BJ (cell line): ENCODE measurements at regions of chr12 and their contacts with region 1.

Region 1: DNA sequence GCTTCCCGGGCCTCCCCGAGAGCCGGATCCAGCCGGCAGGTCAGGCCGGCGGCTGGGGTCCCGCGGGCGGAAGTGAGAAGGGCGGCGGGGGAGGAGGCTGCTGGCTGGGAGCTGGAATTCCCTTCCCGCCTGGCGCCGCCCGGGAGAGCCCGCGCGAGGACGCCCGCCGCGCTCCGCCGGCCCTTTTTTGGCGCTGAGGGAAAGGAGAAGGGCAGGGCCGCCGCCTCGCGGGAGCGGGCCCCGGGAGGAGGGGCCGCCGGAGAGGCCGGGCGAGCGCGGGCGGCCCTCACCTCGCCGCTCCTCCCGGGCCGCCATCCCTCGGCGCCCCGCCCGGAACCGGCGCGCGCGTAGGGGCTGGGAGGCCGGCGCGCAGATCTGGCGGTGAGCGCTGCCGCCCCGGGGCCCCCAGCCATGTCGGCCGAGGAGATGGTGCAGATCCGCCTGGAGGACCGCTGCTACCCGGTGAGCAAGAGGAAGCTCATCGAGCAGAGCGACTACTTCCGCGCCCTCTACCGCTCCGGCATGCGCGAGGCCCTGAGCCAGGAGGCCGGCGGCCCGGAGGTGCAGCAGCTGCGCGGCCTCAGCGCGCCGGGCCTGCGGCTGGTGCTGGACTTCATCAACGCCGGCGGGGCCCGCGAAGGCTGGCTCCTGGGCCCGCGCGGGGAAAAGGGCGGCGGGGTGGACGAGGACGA is at the starts of genes KLHL42 and MANSC4:
- DNase-seq: peak; percentile 19
- H3K4me3 ChIP-seq: peak within 1 kb of the TSS; percentile 78
- H3K27me3 ChIP-seq: no peaks in the 10 kb centered on the region
- CTCF ChIP-seq: no peak
- polyA plus RNA-seq, gene KLHL42: 22.6 and 23.6 TPM in 2 replicates
- polyA plus RNA-seq, gene MANSC4: not detected in 2 replicates

Region 2: DNA sequence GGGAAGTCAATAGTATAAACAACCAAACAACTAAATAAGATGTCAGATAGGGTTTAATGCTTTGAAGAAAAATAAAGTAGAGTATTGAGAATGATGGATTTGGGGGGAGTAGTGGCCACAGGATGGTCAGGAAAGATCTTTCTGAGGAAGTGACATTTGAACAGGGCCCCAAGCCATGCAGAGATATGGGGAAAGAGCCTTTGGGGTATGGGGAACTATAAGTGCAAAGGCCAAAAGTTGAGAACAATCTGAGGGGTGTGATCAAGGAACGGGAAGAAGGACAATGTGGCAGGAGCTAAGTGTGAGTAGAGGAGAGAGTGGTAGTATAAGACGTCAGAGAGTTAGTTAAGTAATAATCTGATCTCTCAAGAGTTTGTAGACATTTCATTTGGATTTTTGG is 68.1 kb before region 1 on chr12:
- CTCF ChIA-PET with region 1: no interaction called
- POLR2A ChIA-PET with region 1: no interaction called
- DNase-seq: no peak
- H3K4me3 ChIP-seq: peak overlapping the region; percentile 63
- H3K27me3 ChIP-seq: no peaks in the 10 kb centered on the region
- CTCF ChIP-seq: no peak

Region 3: DNA sequence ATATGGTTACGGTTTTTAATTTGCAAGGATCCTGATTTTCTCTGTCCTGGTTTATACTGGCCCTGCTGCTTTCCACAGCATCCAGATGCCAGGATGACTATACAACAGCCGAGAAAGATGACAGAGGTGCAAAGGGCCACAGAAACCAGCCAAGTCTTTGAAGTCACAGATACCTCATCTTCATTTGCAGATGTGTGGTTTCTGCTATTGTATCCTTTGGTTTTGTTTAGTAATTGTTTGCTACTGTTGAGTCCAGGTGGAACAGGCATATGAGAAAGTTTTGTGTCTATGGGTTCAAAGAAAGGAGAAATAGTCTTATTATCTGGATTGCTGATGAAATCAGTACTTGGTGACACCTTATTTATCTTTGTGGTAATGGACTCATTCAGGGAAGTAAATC is 17.3 kb before region 1 on chr12:
- CTCF ChIA-PET with region 1: interaction called, 3 read pairs
- POLR2A ChIA-PET with region 1: interaction called, 11 read pairs
- DNase-seq: no peak
- H3K4me3 ChIP-seq: no peak overlapping the region
- H3K27me3 ChIP-seq: no peaks in the 10 kb centered on the region
- CTCF ChIP-seq: no peak

Region 4: GRCh38 chr12:27861428-27862167 is 81.5 kb after region 1 on chr12:
- CTCF ChIA-PET with region 1: no interaction called
- POLR2A ChIA-PET with region 1: no interaction called
- DNase-seq: no peak
- H3K4me3 ChIP-seq: no peak overlapping the region
- H3K27me3 ChIP-seq: 0 out of 2 replicates have a peak, but pooled peaks cover 1% of the 10 kb centered on the region
- CTCF ChIP-seq: no peak